ENCODE measurements at regions of chr16 and their contacts with region 1.

Region 1: GRCh38 chr16:4307215-4308037 is 8.4 kb upstream of the GLIS2 start:
- DNase-seq: peak; percentile 98
- ATAC-seq: peak; percentile 86
- H3K4me3 ChIP-seq: peak overlapping the region; percentile 58 to 95 (median 72)
- H3K4me3 Mint-ChIP-seq: peak overlapping the region; percentile 96
- H3K27ac ChIP-seq: peak overlapping the region; percentile 89 to 91
- H3K27ac Mint-ChIP-seq: peak overlapping the region; percentile 96
- H3K4me1 ChIP-seq: peaks cover 14 to 38% of the 10 kb centered on the region in 2 donors
- H3K4me1 Mint-ChIP-seq: peaks cover 35% of the 10 kb centered on the region
- H3K27me3 ChIP-seq: peaks cover 0 to 2% (median 0%) of the 10 kb centered on the region in 4 experiments
- H3K27me3 Mint-ChIP-seq: no peaks in the 10 kb centered on the region
- CTCF ChIP-seq: no peak

Region 2: DNA sequence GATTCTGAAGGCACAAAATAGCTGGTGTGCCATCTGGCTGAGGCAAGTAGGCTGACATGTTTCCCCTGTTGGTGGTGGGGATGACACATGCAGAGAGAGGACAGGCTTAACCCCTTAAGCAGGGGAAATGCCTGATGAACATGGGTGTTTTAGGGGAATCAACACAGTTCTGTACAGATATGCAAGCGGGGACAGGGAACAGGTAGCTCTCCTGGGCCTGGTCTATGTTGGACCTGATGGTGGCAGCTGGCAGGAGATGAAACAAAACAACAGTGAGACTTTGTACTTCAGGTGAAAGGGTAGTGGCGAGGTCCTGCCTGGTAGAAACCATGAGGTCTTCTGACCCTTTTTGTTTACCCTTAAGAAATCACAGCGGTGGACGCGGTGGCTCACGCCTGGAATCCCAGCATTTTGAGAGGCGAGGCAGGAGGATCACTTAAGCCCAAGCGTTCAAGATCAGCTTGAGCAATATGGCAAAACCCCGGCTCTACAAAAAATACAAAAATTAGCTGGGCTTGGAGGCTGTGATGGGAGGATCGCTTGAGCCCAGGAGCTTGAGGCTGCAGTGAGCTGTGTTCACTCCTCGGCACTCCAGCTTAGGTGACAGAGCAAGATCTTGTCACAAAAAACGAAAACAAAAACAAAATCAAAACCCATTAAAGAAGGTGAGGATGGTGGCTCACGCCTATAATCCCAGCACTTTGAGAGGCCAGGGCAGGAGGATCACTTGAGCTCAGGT is 1108.9 kb before region 1 on chr16:
- CTCF ChIA-PET with region 1: no interaction called
- POLR2A ChIA-PET with region 1: no interaction called
- intact Hi-C with region 1: no loop called
- DNase-seq: no peak
- ATAC-seq: no peak
- H3K4me3 ChIP-seq: no peak overlapping the region
- H3K4me3 Mint-ChIP-seq: no peak overlapping the region
- H3K27ac ChIP-seq: no peak overlapping the region
- H3K27ac Mint-ChIP-seq: no peak overlapping the region
- H3K4me1 ChIP-seq: no peaks in the 10 kb centered on the region
- H3K4me1 Mint-ChIP-seq: no peaks in the 10 kb centered on the region
- H3K27me3 ChIP-seq: peaks cover 0 to 36% (median 17%) of the 10 kb centered on the region in 4 experiments
- H3K27me3 Mint-ChIP-seq: peaks cover 50% of the 10 kb centered on the region
- CTCF ChIP-seq: no peak

Region 3: GRCh38 chr16:4288148-4288921 is 19.1 kb before region 1 on chr16:
- CTCF ChIA-PET with region 1: interaction called, 55 read pairs
- POLR2A ChIA-PET with region 1: no interaction called
- intact Hi-C with region 1: loop called (anchors 1 kb)
- DNase-seq: peak; percentile 87
- ATAC-seq: peak; percentile 98
- H3K4me3 ChIP-seq: no peak overlapping the region
- H3K4me3 Mint-ChIP-seq: no peak overlapping the region
- H3K27ac ChIP-seq: no peak overlapping the region
- H3K27ac Mint-ChIP-seq: no peak overlapping the region
- H3K4me1 ChIP-seq: peaks cover 7 to 8% of the 10 kb centered on the region in 2 donors
- H3K4me1 Mint-ChIP-seq: peaks cover 6% of the 10 kb centered on the region
- H3K27me3 ChIP-seq: peaks cover 0 to 3% (median 0%) of the 10 kb centered on the region in 4 experiments
- H3K27me3 Mint-ChIP-seq: peaks cover 20% of the 10 kb centered on the region
- CTCF ChIP-seq: peak; percentile 97

Region 4: DNA sequence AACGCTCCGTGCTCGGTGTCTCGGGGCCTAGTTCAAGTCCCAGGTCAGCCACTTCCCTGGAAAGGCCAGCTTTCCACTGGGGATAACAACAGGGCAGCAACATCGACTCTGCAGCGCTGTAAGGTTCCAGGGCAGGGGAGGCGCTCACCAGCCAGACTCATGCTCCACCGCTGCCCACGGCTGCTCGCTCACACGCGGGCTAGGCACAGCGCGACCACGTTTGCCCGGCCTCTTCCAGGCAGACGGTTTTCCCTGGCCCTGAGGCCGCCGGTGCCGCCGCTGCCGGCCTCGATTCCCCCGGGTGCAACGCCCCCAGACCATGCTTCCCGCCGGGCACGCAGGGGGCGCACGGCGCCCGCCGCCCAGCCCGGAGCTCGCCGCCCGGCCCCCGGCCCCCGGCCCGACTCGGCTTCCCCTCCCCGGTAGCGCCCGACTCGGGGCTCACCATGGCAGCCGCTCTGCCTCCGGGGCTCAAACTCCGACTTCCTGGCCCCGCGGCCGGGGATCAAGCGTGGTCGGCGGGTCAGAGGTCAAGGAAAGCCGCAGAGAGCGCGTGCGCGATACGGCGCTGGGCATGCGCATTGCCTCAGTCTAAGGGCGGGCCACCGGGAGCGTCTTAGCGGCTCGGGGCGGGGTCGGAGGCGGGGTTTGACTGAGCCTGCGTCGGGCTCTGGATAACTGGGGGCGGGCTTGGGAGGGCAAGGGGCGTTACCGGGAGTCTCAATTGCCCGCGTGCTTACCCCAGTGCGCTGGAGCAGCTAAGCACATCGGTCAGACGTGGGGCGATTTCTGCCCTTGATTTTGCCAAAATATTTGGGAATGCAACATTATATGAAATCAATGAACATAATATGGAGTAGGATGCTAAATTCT is 43.6 kb after region 1 on chr16 and contains the start of gene PAM16:
- CTCF ChIA-PET with region 1: interaction called, 4 read pairs
- POLR2A ChIA-PET with region 1: interaction called, 3 read pairs
- intact Hi-C with region 1: loop called (anchors 1 kb)
- DNase-seq: peak; percentile 97
- ATAC-seq: peak; percentile 92
- H3K4me3 ChIP-seq: peak within 1 kb of the TSS; percentile 56 to 84 (median 81)
- H3K4me3 Mint-ChIP-seq: peak within 1 kb of the TSS; percentile 96
- H3K27ac ChIP-seq: peak within 1 kb of the TSS; percentile 57 to 78
- H3K27ac Mint-ChIP-seq: peak within 1 kb of the TSS; percentile 95
- H3K4me1 ChIP-seq: peaks cover 9 to 17% of the 10 kb centered on the region in 2 donors
- H3K4me1 Mint-ChIP-seq: peaks cover 22% of the 10 kb centered on the region
- H3K27me3 ChIP-seq: no peaks in the 10 kb centered on the region
- H3K27me3 Mint-ChIP-seq: no peaks in the 10 kb centered on the region
- CTCF ChIP-seq: peak; percentile 33
- total RNA-seq, gene PAM16: 56.6 and 57.3 TPM in 2 replicates

Region 5: DNA sequence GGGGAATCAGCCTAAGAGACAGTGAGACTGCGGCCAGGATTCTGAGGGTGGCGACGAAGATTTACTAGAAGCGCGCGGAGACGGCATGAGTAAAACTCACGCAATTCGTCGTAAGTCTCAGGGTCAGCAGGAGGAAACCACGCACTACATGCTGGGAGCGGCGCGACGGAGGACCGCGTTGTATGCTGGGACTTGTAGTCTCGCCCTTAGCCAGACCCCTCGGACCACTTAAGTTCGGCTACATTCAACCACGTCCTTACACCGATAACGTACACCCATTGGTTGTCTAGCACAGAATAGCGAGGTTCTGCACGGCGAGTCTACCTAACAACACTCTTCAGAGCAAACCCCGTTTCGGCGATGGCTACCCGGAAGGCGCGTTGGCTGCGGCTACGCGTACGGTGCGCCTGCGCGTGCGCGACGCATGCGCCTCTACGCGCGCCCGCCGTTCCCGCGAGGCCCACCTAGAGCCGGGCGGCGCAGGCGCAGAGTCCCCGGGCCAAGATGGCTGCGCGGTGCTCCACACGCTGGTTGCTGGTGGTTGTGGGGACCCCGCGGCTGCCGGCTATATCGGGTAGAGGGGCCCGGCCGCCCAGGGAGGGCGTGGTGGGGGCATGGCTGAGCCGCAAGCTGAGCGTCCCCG is 118.1 kb after region 1 on chr16 and contains the start of gene DNAJA3:
- CTCF ChIA-PET with region 1: interaction called, 5 read pairs
- POLR2A ChIA-PET with region 1: no interaction called
- intact Hi-C with region 1: loop called (anchors 1 kb)
- DNase-seq: peak; percentile 98
- ATAC-seq: peak; percentile 92
- H3K4me3 ChIP-seq: peak within 1 kb of the TSS; percentile 80 to 99 (median 89)
- H3K4me3 Mint-ChIP-seq: peak within 1 kb of the TSS; percentile 97
- H3K27ac ChIP-seq: peak within 1 kb of the TSS; percentile 93 to 96
- H3K27ac Mint-ChIP-seq: peak within 1 kb of the TSS; percentile 100
- H3K4me1 ChIP-seq: peaks cover 14 to 20% of the 10 kb centered on the region in 2 donors
- H3K4me1 Mint-ChIP-seq: peaks cover 25% of the 10 kb centered on the region
- H3K27me3 ChIP-seq: no peaks in the 10 kb centered on the region
- H3K27me3 Mint-ChIP-seq: no peaks in the 10 kb centered on the region
- CTCF ChIP-seq: no peak
- total RNA-seq, gene DNAJA3: 59.3 and 68.1 TPM in 2 replicates

Region 6: GRCh38 chr16:4556112-4556511 is 248.7 kb after region 1 on chr16 and contains the start of gene C16orf96:
- CTCF ChIA-PET with region 1: no interaction called
- POLR2A ChIA-PET with region 1: no interaction called
- intact Hi-C with region 1: no loop called
- DNase-seq: no peak
- ATAC-seq: no peak
- H3K4me3 ChIP-seq: no peak within 1 kb of the TSS
- H3K4me3 Mint-ChIP-seq: no peak within 1 kb of the TSS
- H3K27ac ChIP-seq: no peak within 1 kb of the TSS
- H3K27ac Mint-ChIP-seq: no peak within 1 kb of the TSS
- H3K4me1 ChIP-seq: no peaks in the 10 kb centered on the region
- H3K4me1 Mint-ChIP-seq: no peaks in the 10 kb centered on the region
- H3K27me3 ChIP-seq: no peaks in the 10 kb centered on the region
- H3K27me3 Mint-ChIP-seq: peaks cover 10% of the 10 kb centered on the region
- CTCF ChIP-seq: no peak
- total RNA-seq, gene C16orf96: 0.66 and 0.79 TPM in 2 replicates

Region 7: GRCh38 chr16:4616047-4616811 is 308.8 kb after region 1 on chr16:
- CTCF ChIA-PET with region 1: no interaction called
- POLR2A ChIA-PET with region 1: no interaction called
- intact Hi-C with region 1: no loop called
- DNase-seq: peak; percentile 99
- ATAC-seq: peak; percentile 84
- H3K4me3 ChIP-seq: peak overlapping the region; percentile 4 to 81 (median 55)
- H3K4me3 Mint-ChIP-seq: peak overlapping the region; percentile 92
- H3K27ac ChIP-seq: peak overlapping the region; percentile 86 to 96
- H3K27ac Mint-ChIP-seq: peak overlapping the region; percentile 92
- H3K4me1 ChIP-seq: peaks cover 28 to 39% of the 10 kb centered on the region in 2 donors
- H3K4me1 Mint-ChIP-seq: peaks cover 29% of the 10 kb centered on the region
- H3K27me3 ChIP-seq: no peaks in the 10 kb centered on the region
- H3K27me3 Mint-ChIP-seq: no peaks in the 10 kb centered on the region
- CTCF ChIP-seq: peak; percentile 64

Region 8: GRCh38 chr16:4693296-4693955 is 386.0 kb after region 1 on chr16 and contains the start of gene NUDT16L1:
- CTCF ChIA-PET with region 1: no interaction called
- POLR2A ChIA-PET with region 1: no interaction called
- intact Hi-C with region 1: loop called (anchors 5 kb)
- DNase-seq: peak; percentile 97
- ATAC-seq: peak; percentile 95
- H3K4me3 ChIP-seq: peak within 1 kb of the TSS; percentile 50 to 85 (median 81)
- H3K4me3 Mint-ChIP-seq: peak within 1 kb of the TSS; percentile 91
- H3K27ac ChIP-seq: peak within 1 kb of the TSS; percentile 34 to 87
- H3K27ac Mint-ChIP-seq: peak within 1 kb of the TSS; percentile 90
- H3K4me1 ChIP-seq: peaks cover 15 to 19% of the 10 kb centered on the region in 2 donors
- H3K4me1 Mint-ChIP-seq: peaks cover 22% of the 10 kb centered on the region
- H3K27me3 ChIP-seq: no peaks in the 10 kb centered on the region
- H3K27me3 Mint-ChIP-seq: no peaks in the 10 kb centered on the region
- CTCF ChIP-seq: no peak
- total RNA-seq, gene NUDT16L1: 38.5 and 43.2 TPM in 2 replicates